Ascending aorta (tissue), 2 donors: ENCODE measurements at regions of chr4 and their contacts with region 1.

Region 1: DNA sequence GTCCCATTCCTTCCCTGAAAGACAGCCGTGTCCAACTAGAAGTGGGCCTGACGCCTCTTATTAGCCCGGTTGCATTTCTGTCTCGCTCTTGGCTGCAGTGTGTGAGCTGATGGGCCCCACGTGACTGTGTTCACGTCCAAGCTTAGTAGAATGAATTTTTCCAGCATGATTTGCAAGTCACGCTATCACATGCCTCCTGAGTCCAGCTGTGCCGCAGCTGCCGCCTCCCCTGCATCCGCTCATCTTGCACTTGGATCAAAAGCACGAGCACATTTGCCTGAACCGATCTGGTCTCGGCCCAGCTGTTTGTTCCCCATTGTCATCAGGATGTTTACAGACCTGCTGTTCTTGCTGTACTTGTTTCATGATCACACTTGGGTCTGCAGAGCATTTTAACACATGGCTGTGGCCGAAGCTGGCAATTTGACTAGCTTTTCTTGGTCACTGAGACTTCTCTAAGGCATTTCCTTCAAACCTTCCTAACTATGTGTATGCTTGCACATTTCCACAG is 126.5 kb downstream of the KIT start:
- DNase-seq: peak; percentile 76 to 95
- H3K4me3 ChIP-seq: peak overlapping the region in 1 of 2 donors; percentile 37
- H3K27ac ChIP-seq: peak overlapping the region; percentile 77 to 83
- H3K4me1 ChIP-seq: peaks cover 0 to 26% of the 10 kb centered on the region in 2 donors
- H3K27me3 ChIP-seq: no peaks in the 10 kb centered on the region
- CTCF ChIP-seq: no peak

Region 2: DNA sequence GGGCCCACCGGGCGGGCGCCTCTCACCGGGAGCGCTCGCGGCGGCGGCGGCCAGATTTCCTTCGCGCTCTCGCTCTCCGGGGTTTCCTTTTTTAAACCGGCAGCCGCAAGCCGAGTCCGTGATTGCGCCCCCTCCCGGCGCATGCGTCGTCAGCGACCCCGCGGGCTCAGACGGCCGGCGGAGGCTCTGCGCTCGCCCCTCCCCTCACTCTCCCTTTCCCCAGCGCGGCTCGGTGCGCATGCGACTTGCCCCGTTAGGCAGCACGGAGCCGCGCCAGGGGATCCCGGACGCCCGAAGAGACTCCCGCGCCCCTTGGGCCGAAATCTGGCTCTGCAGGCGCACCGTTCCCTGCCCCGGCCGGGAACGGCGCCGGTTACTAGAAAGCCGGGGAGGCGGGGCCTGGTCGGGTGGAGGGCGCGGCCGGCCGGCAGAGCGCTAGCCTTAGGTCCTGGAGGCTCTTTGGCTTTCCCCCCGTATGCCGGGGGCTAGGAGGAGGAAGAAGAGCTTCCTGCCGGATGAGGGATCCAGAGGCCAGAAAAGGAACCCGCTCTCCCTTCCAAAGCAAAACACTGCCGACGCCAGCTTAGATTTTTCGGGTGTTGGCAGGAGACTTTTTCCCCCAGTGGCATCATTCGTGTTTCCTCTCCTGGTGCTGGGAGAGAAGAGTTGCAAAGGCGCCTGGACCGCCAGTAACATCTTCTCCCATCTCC is 762.7 kb after region 1 on chr4 and contains the start of gene CLOCK:
- intact Hi-C with region 1: loop called (anchors 5 kb)
- DNase-seq: peak; percentile 39 to 91
- H3K4me3 ChIP-seq: peak within 1 kb of the TSS; percentile 87 to 91
- H3K27ac ChIP-seq: peak within 1 kb of the TSS; percentile 96 to 97
- H3K4me1 ChIP-seq: peaks cover 0 to 18% of the 10 kb centered on the region in 2 donors
- H3K27me3 ChIP-seq: no peaks in the 10 kb centered on the region
- CTCF ChIP-seq: peak; percentile 39 to 58 (median 57)
- total RNA-seq, gene CLOCK: 17.6 TPM